Activated CD4-positive, alpha-beta memory T cell treated with anti-CD3 and anti-CD28 coated beads for 36 hours (primary cell): ENCODE measurements at regions of chr14 and their contacts with region 1.

Region 1: DNA sequence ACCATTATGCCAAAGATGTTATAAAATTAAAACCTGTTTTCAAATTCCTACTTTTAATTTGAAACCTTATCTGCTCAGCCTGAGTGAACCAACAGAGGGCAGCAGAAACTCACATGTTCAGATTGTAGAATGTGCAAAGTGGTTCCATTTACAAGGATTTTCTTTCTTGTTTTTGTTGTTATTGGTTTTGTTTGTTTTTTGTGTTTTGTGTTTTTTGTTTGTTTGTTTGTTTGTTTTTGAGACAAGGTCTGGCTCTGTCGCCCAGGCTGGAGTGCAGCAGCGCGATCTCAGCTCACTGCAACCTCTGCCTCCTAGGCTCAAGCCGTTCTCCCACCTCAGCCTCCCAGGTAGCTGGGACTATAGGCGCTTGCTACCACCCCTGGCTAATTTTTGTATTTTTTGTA is 22.8 kb upstream of the GARIN2 start:
- DNase-seq: peak; percentile 35
- H3K4me3 Mint-ChIP-seq: no peak overlapping the region
- H3K27ac Mint-ChIP-seq: no peak overlapping the region
- H3K4me1 Mint-ChIP-seq: peaks cover 2% of the 10 kb centered on the region
- H3K27me3 Mint-ChIP-seq: no peaks in the 10 kb centered on the region

Region 2: DNA sequence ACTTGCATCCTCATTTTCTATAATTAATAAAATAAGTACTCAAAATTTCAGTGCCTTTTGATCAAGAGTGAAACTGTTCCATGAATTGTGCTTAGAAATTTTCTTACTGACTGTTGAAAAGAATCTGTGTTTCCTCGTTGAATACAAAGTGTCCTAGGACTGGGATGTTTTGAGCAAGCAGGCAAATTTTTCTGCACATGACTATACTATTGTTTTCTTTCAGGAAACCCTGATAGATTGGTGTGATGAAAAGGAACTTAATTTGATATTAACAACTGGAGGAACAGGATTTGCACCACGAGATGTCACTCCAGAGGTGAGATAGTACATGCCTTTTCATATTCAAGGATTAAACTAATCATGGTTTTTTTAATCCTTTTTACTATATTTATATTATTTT is 342.2 kb before region 1 on chr14:
- CTCF ChIA-PET with region 1: no interaction called
- POLR2A ChIA-PET with region 1: no interaction called
- intact Hi-C with region 1: no loop called
- DNase-seq: no peak
- H3K4me3 Mint-ChIP-seq: no peak overlapping the region
- H3K27ac Mint-ChIP-seq: no peak overlapping the region
- H3K4me1 Mint-ChIP-seq: no peaks in the 10 kb centered on the region
- H3K27me3 Mint-ChIP-seq: no peaks in the 10 kb centered on the region

Region 3: GRCh38 chr14:67276131-67276530 is 109.7 kb after region 1 on chr14:
- CTCF ChIA-PET with region 1: interaction called, 20 read pairs
- POLR2A ChIA-PET with region 1: no interaction called
- intact Hi-C with region 1: no loop called
- DNase-seq: no peak
- H3K4me3 Mint-ChIP-seq: no peak overlapping the region
- H3K27ac Mint-ChIP-seq: no peak overlapping the region
- H3K4me1 Mint-ChIP-seq: peaks cover 5% of the 10 kb centered on the region
- H3K27me3 Mint-ChIP-seq: no peaks in the 10 kb centered on the region

Region 4: GRCh38 chr14:67335781-67336180 is 169.3 kb after region 1 on chr14:
- CTCF ChIA-PET with region 1: interaction called, 6 read pairs
- POLR2A ChIA-PET with region 1: no interaction called
- intact Hi-C with region 1: loop called (anchors 1 kb)
- DNase-seq: no peak
- H3K4me3 Mint-ChIP-seq: no peak overlapping the region
- H3K27ac Mint-ChIP-seq: no peak overlapping the region
- H3K4me1 Mint-ChIP-seq: no peaks in the 10 kb centered on the region
- H3K27me3 Mint-ChIP-seq: no peaks in the 10 kb centered on the region